ENCODE measurements at regions of chr9 and their contacts with region 1.

Region 1: GRCh38 chr9:93531374-93531773 is 45.0 kb upstream of the PHF2 start:
- DNase-seq: no peak
- ATAC-seq: peak in 1 of 4 donors; percentile 36
- H3K4me3 ChIP-seq: no peak overlapping the region
- H3K27ac ChIP-seq: no peak overlapping the region
- H3K4me1 ChIP-seq: no peaks in the 10 kb centered on the region
- H3K27me3 ChIP-seq: no peaks in the 10 kb centered on the region
- CTCF ChIP-seq: no peak

Region 2: DNA sequence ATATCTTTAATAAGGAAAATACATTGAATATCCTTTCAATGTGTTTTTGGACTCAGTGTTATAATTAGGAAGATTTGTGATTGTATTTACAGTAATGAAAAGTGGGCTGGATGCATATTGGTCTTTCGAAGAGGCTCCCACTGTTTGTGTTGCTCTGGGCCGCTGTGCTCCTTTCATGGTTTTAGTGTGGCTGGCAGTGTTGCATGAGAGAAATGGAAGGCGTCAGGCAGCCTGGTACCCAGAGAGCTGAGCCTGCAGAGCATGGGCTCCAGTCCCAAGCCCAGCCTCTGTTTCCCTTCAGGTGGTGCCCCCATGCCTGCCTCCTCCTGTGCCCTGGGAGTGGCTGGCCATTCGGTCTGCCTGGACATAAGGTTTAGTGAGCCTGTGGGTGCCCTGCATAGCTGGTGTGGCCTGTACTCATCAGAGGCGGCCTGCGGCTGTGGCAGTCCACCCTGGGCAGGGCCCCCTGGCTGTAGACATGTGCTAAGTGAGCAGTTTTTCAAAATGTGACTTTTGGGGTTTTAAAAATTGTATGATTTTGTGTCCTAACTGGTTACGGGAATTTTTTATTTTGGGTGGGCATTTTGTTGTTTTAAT is 50.5 kb before region 1 on chr9:
- intact Hi-C with region 1: loop called in 1 of 3 experiments (anchors 10 kb)
- DNase-seq: no peak
- ATAC-seq: no peak
- H3K4me3 ChIP-seq: no peak overlapping the region
- H3K27ac ChIP-seq: no peak overlapping the region
- H3K4me1 ChIP-seq: no peaks in the 10 kb centered on the region
- H3K27me3 ChIP-seq: no peaks in the 10 kb centered on the region
- CTCF ChIP-seq: no peak

Region 3: DNA sequence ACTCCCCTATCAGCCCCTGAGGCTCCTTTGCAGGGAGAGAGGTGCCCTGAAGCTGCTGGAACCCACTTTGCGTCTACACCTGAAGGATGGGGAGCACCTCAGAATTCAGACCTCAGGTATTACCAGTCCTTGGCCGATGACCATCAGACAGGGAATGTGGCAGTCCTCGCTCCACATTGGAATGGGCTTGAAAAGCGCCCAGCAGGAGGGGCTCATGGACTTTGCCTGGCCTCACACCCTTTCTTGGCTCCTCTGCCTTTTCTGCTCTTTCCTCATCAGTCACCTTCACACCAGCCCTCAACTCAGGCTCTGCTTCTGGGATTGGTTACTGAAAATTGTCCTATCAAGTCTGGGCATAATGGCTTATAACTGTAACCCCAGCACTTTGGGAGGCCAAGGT is 339.9 kb after region 1 on chr9:
- intact Hi-C with region 1: no loop called
- DNase-seq: no peak
- ATAC-seq: peak in 3 of 4 donors; percentile 30 to 36 (median 32)
- H3K4me3 ChIP-seq: no peak overlapping the region
- H3K27ac ChIP-seq: no peak overlapping the region
- H3K4me1 ChIP-seq: no peaks in the 10 kb centered on the region
- H3K27me3 ChIP-seq: no peaks in the 10 kb centered on the region
- CTCF ChIP-seq: no peak

Measured in pancreas (tissue), 10 donors.